ENCODE measurements at regions of chr14 and their contacts with region 1.

Region 1: GRCh38 chr14:77086017-77086736 is 11.9 kb upstream of the CIPC start:
- DNase-seq: peak in 2 of 3 donors; percentile 39 to 45
- H3K4me3 ChIP-seq: no peak overlapping the region
- H3K27ac ChIP-seq: no peak overlapping the region
- H3K4me1 ChIP-seq: peaks cover 0 to 5% (median 0%) of the 10 kb centered on the region in 4 experiments
- H3K27me3 ChIP-seq: no peaks in the 10 kb centered on the region

Region 2: DNA sequence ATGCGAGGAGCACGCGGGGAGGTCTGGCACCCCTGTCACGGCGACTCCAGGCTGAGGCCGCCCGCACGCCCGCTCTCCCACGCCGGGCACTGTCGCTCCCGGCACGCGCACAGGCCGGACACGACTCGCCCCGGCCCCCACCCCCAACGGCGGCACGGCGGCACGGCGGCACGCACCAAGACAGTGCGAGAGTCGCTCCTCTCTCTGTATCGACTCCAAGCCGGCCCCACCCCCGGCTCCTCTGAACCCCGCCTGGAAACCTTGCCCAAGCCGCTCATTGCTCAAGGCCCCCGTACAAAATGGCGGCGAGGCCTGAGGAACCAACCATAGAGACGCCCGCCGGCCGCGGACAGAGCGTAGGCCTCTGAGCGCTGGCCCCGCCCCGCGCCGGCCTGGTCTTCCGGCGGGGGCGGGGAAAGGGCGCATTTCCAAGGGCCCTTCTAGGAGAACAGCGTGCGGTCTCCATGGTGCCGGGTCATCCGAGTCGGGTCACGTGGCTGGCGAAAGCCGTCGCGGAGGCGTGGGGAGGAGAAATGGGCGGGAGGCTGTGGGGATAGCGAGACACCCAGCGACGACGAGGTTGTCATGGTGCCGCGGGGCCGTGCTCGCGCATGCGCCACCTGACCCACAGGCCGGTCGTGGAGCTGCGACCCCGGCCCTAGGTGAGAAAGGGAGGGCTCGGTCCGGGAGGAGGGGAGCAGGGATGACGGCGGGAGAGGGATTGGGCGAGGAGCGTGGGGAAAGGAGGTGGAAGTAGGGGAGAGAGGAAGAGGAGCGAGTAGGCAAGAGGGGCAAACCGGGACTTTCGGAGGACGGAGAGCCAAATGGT is 11.7 kb after region 1 on chr14 and contains the start of gene CIPC:
- CTCF ChIA-PET with region 1: interaction called, 10 read pairs
- POLR2A ChIA-PET with region 1: no interaction called
- DNase-seq: peak; percentile 99 to 100 (median 99)
- H3K4me3 ChIP-seq: peak within 1 kb of the TSS; percentile 83 to 98 (median 95)
- H3K27ac ChIP-seq: peak within 1 kb of the TSS; percentile 83 to 95
- H3K4me1 ChIP-seq: peaks cover 2 to 33% (median 22%) of the 10 kb centered on the region in 4 experiments
- H3K27me3 ChIP-seq: no peaks in the 10 kb centered on the region